MCF 10A (cell line): ENCODE measurements at regions of chr6 and their contacts with region 1.

Region 1: GRCh38 chr6:291697-292505 is at the start of gene DUSP22:
- DNase-seq: peak; percentile 91
- H3K4me3 Mint-ChIP-seq: peak within 1 kb of the TSS; percentile 91
- H3K27ac Mint-ChIP-seq: peak within 1 kb of the TSS; percentile 96
- H3K4me1 Mint-ChIP-seq: peaks cover 38% of the 10 kb centered on the region
- H3K27me3 Mint-ChIP-seq: no peaks in the 10 kb centered on the region
- CTCF ChIP-seq: no peak
- total RNA-seq, gene DUSP22: 29.4 and 40.7 TPM in 2 replicates

Region 2: DNA sequence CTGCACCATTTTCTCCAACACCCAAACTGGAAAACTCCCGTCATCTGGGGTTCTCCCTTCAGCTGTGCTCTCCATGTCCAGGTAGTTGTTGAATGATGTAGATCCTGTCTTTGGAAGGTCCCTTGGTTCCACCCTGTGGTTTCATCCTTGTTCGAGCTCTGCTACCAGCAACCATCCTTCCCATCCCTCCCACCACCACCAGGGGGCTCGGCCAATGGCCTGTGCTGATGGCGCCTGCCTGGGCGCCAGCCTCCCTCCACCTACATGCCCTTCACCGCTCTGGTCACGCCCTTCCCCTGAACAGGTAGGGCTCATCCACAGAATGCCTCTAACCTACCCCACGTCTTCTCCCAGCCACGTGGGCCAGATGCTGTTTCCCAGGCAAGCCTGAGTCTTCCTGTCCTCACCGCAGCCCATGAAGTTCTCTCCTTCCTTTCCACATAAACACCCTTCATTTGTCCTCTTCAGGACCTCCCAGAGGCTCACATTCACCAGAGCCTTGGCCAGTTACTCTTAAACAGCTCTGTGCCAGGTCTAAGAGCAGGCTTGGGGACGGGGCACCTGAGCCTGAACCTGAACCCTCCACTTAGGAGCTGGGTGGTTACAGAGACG is 74.7 kb before region 1 on chr6:
- CTCF ChIA-PET with region 1: interaction called, 5 read pairs
- POLR2A ChIA-PET with region 1: interaction called, 22 read pairs
- intact Hi-C with region 1: no loop called
- DNase-seq: peak; percentile 28
- H3K4me3 Mint-ChIP-seq: no peak overlapping the region
- H3K27ac Mint-ChIP-seq: no peak overlapping the region
- H3K4me1 Mint-ChIP-seq: peaks cover 36% of the 10 kb centered on the region
- H3K27me3 Mint-ChIP-seq: no peaks in the 10 kb centered on the region
- CTCF ChIP-seq: peak; percentile 46

Region 3: DNA sequence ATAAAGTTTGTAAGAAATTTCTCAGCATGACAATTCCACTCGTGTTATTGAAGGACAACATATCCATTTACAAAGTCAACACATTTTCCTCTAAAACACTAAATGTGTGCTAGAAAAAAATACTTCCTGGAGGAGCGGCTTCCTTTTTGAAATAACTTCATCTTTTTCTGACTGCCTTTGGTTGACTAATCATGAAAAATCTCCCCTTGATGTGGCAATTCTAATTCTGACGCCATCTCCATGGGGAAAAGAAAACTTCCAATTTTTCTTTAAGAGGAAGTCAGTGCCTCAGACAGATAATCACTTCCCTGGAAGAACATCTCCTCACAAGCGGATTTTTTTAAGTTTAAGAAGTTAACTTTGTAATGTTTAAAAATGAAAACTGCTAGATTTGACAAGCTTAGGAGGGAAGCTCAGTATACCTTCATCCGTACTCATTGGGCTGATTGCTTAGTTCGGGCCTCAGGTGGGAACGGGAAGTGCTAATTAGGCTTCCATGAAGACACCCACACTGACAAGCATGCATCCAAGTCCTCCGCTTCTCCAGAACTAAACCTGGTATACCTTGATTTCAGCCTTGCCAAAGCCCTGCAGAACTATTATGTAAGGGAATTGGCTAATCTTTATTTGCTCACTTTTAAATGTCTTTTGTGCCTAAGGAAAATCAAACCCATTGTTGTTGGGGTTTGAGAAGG is 34.7 kb before region 1 on chr6:
- CTCF ChIA-PET with region 1: no interaction called
- POLR2A ChIA-PET with region 1: interaction called, 14 read pairs
- intact Hi-C with region 1: no loop called
- DNase-seq: peak; percentile 70
- H3K4me3 Mint-ChIP-seq: no peak overlapping the region
- H3K27ac Mint-ChIP-seq: peak overlapping the region; percentile 66
- H3K4me1 Mint-ChIP-seq: peaks cover 20% of the 10 kb centered on the region
- H3K27me3 Mint-ChIP-seq: no peaks in the 10 kb centered on the region
- CTCF ChIP-seq: no peak

Region 4: DNA sequence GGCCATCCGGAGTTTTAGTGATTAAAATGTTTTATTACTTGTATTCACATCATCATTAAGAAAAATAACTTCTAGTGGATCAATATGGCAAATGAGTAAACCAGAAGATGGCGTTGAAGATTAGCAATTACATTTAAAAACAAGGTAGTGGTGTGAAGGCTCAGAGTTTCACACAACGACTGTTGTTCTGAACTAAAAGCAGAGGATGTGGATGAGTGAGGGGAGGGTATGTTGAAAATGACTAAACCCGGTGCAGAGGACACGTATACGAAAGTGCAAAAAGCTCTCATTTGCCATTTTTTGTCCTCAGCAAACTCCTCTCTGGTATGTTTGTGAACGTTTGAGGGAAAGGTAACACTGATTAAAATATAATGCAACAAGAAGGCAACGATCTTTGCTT is 97.7 kb after region 1 on chr6:
- CTCF ChIA-PET with region 1: no interaction called
- POLR2A ChIA-PET with region 1: interaction called, 7 read pairs
- intact Hi-C with region 1: loop called (anchors 10 kb)
- DNase-seq: no peak
- H3K4me3 Mint-ChIP-seq: no peak overlapping the region
- H3K27ac Mint-ChIP-seq: no peak overlapping the region
- H3K4me1 Mint-ChIP-seq: peaks cover 23% of the 10 kb centered on the region
- H3K27me3 Mint-ChIP-seq: peaks cover 12% of the 10 kb centered on the region
- CTCF ChIP-seq: no peak

Region 5: DNA sequence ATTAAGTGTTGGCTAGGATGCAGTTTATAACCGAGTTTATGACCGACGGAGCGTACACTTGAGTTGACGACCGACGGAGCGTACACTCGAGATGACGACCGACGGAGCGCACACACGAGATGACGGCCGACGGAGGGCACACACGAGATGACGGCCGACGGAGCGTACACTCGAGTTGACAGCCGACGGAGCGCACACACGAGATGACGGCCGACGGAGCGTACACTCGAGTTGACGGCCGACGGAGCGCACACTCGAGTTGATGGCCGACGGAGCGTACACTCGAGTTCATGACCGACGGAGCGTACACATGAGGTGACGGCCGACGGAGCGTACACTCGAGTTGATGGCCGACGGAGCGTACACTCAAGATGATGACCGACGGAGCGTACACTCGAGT is 245.2 kb after region 1 on chr6:
- CTCF ChIA-PET with region 1: no interaction called
- POLR2A ChIA-PET with region 1: no interaction called
- intact Hi-C with region 1: no loop called
- DNase-seq: no peak
- H3K4me3 Mint-ChIP-seq: no peak overlapping the region
- H3K27ac Mint-ChIP-seq: no peak overlapping the region
- H3K4me1 Mint-ChIP-seq: no peaks in the 10 kb centered on the region
- H3K27me3 Mint-ChIP-seq: no peaks in the 10 kb centered on the region
- CTCF ChIP-seq: no peak

Region 6: GRCh38 chr6:551405-551804 is 259.5 kb after region 1 on chr6:
- CTCF ChIA-PET with region 1: no interaction called
- POLR2A ChIA-PET with region 1: no interaction called
- intact Hi-C with region 1: loop called (anchors 5 kb)
- DNase-seq: peak; percentile 59
- H3K4me3 Mint-ChIP-seq: no peak overlapping the region
- H3K27ac Mint-ChIP-seq: no peak overlapping the region
- H3K4me1 Mint-ChIP-seq: no peaks in the 10 kb centered on the region
- H3K27me3 Mint-ChIP-seq: no peaks in the 10 kb centered on the region
- CTCF ChIP-seq: no peak